HEK293T (cell line): ENCODE measurements at regions of chr6 and their contacts with region 1.

Region 1: GRCh38 chr6:157323255-157323965 is at the start of gene TMEM242:
- DNase-seq: peak; percentile 89

Region 2: DNA sequence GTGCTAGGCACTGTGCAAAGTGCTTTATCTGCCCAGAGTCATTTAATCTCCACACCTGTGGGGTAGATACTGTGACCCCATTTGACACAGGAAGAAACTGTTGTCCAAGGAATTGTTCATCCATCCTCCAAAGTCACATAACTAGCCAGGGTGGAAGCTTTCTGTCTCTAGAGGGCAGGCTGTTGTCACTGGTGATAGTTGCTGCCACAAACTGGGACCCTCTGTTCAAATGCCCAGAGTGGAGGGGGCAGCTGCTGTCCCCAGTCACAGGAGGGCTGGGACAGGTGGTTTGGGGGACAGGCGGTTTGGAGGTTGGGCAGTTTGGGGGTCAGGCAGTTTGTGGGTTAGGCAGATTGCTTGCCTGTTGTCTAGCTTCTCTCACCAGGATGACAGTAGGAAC is 16.0 kb after region 1 on chr6:
- CTCF ChIA-PET with region 1: interaction called, 6 read pairs
- POLR2A ChIA-PET with region 1: interaction called, 60 read pairs
- DNase-seq: no peak

Region 3: DNA sequence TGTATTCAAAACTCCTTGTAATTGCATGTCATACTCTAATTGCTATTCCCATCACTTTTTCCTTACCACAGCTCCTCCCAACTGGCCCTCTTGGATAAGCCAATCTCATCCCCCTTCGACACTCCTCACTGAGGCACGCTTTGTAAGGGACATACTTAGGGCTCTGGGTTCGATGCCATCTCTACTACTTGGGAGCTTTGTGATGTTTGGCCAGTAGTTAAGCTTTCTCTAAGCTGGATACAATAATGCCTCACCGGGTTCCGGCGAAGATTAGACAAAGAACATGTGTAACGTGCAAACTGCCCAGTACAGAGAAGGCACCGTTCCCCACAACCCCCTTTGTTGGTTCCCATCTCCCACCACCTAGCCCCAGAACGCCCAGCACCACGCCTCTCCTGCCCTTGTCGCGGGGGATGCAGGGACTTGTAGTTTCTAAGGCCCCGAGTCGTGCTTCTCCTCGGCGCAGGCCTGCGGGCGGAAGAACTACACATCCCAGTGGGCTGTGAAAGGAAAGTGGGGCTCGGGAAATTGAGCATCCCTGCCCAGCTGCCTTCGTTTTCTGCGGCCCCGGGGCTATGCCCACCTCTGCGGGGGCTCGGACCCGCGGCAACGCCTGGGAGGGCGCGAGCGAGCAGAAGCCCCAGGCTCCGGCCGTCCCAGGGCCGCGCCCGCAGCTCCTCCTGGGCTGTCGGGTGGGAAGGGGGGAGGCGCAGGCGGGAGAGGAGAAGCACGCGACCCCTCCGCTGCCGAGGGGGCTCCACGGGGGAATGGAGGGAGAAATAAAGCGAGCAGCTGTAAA is 56.4 kb after region 1 on chr6:
- CTCF ChIA-PET with region 1: no interaction called
- POLR2A ChIA-PET with region 1: interaction called, 29 read pairs
- DNase-seq: peak; percentile 94

Region 4: DNA sequence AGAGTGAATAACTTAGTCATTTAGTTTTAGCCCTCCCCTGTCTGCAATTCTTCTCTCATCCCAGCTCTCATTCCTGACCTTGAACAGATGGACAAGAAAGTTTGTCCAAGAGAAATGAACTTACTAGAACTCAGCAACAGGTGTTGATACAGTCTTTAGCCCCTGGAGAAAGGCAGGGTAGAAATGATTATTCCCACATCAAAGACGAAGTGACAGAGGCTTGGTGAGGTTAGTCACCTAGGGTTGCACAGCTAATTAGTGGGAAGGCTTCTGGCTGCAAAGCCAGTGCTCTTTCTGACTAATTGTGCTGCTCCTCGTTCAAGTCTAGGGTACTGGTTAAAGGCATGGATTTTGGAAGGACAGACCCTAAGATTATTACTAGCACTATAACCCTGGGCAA is 62.1 kb after region 1 on chr6:
- CTCF ChIA-PET with region 1: no interaction called
- POLR2A ChIA-PET with region 1: interaction called, 29 read pairs
- DNase-seq: no peak

Region 5: GRCh38 chr6:157614026-157614568 is 290.7 kb after region 1 on chr6:
- CTCF ChIA-PET with region 1: interaction called, 4 read pairs
- POLR2A ChIA-PET with region 1: interaction called, 24 read pairs
- DNase-seq: no peak

Region 6: GRCh38 chr6:157656437-157656997 is 333.1 kb after region 1 on chr6:
- CTCF ChIA-PET with region 1: interaction called, 8 read pairs
- POLR2A ChIA-PET with region 1: interaction called, 12 read pairs
- DNase-seq: no peak

Region 7: GRCh38 chr6:157669747-157670216 is 346.4 kb after region 1 on chr6:
- CTCF ChIA-PET with region 1: no interaction called
- POLR2A ChIA-PET with region 1: interaction called, 10 read pairs
- DNase-seq: no peak